Activated CD4-positive, alpha-beta memory T cell treated with anti-CD3 and anti-CD28 coated beads, Interleukin-2, amount 10 ng/mL, durations not matched to agents 7 days and 5 days (primary cell): ENCODE measurements at regions of chr17 and their contacts with region 1.

Region 1: GRCh38 chr17:75855310-75856081 is at the start of gene WBP2:
- DNase-seq: peak; percentile 98
- H3K4me3 Mint-ChIP-seq: no peak within 1 kb of the TSS
- H3K27ac Mint-ChIP-seq: peak within 1 kb of the TSS; percentile 85
- H3K4me1 Mint-ChIP-seq: peaks cover 43% of the 10 kb centered on the region
- H3K27me3 Mint-ChIP-seq: no peaks in the 10 kb centered on the region
- total RNA-seq, gene WBP2: 107 to 114 TPM

Region 2: DNA sequence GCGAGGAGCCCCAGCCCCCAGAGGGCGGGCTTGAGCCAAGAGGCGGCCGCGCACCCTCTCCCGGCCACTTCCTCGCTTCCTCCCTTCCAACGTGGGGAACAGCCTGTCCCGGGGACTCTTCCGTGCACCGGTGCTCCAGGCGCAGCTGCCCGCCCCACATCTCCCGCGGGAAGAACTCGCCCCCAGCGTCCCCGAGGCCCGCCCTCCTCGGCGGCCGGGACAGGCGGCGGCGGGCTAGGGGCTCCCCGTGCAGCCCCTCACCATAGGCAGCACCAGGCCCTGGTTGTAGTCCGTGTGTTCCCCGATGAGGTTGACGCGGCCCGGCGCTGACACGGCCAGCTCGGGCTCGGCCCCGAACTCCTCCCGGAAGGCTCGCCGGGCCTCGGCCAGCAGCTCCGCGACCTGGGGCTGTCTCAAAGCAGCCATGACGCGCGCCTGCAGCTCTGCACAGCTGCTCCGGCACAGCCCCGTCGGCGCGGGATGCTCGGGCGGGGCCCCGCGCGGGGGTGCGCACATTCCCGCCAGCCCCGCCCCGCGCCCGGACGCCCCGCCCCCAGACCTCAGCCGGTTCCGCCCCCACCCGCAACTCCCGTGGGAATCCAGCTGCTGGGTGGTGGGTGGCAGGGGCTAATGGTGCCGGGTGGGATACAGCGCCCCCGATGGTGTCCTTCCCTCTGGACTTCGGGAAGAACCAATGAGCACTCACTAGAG is 90.6 kb before region 1 on chr17 and contains the start of gene GALK1:
- CTCF ChIA-PET with region 1: interaction called, 5 read pairs
- POLR2A ChIA-PET with region 1: interaction called, 10 read pairs
- DNase-seq: peak; percentile 82
- H3K4me3 Mint-ChIP-seq: peak within 1 kb of the TSS; percentile 77
- H3K27ac Mint-ChIP-seq: peak within 1 kb of the TSS; percentile 49
- H3K4me1 Mint-ChIP-seq: peaks cover 19% of the 10 kb centered on the region
- H3K27me3 Mint-ChIP-seq: peaks cover 4% of the 10 kb centered on the region
- total RNA-seq, gene GALK1: 40.0 to 40.6 TPM

Region 3: GRCh38 chr17:75784473-75785015 is 71.0 kb before region 1 on chr17 and contains the start of gene UNK:
- CTCF ChIA-PET with region 1: interaction called, 17 read pairs
- POLR2A ChIA-PET with region 1: interaction called, 87 read pairs
- DNase-seq: peak; percentile 96
- H3K4me3 Mint-ChIP-seq: peak within 1 kb of the TSS; percentile 90
- H3K27ac Mint-ChIP-seq: peak within 1 kb of the TSS; percentile 100
- H3K4me1 Mint-ChIP-seq: peaks cover 52% of the 10 kb centered on the region
- H3K27me3 Mint-ChIP-seq: no peaks in the 10 kb centered on the region
- total RNA-seq, gene UNK: 26.1 TPM

Region 4: GRCh38 chr17:75872434-75873351 is 17.2 kb after region 1 on chr17:
- CTCF ChIA-PET with region 1: interaction called, 91 read pairs
- POLR2A ChIA-PET with region 1: interaction called, 221 read pairs
- DNase-seq: peak; percentile 86
- H3K4me3 Mint-ChIP-seq: peak overlapping the region; percentile 24
- H3K27ac Mint-ChIP-seq: peak overlapping the region; percentile 96
- H3K4me1 Mint-ChIP-seq: peaks cover 50% of the 10 kb centered on the region
- H3K27me3 Mint-ChIP-seq: no peaks in the 10 kb centered on the region

Region 5: DNA sequence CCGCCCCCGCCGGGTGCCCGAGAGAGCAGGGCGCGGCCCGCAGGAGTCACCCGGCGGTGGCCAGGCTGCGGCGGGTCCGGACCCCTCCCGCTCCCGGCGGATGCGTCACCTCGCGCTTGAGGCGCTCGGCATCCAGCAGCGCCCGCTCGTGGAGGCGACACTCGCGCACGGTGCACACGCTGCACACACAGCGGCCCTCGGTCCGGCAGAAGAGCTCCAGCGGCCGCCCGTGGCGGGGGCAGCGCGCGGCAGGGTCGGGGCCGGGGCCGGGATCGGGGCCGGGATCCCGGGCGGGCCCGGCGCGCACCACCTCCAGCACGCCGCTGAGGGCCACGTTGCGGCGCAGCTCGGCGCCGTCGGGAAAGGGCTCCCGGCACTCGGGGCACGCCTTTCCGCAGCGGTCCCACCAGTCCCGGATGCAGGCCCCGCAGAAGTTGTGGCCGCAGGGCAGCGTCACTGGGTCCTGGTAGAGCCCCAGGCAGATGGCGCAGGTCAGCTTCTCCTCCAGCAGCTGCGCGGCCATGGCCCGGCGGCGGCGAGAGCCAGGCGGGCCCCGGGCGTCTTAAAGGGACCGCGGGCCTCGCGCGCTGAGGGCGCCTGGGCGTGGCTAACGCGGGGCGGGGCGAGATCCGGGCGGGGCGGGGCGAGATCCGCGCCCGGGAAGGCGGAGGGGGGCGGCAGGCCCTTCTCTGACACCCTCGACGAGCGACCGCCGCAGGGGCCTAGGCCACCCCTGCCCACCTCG is 41.1 kb after region 1 on chr17 and contains the start of gene TRIM65:
- CTCF ChIA-PET with region 1: interaction called, 20 read pairs
- POLR2A ChIA-PET with region 1: interaction called, 50 read pairs
- DNase-seq: peak; percentile 83
- H3K4me3 Mint-ChIP-seq: peak within 1 kb of the TSS; percentile 81
- H3K27ac Mint-ChIP-seq: peak within 1 kb of the TSS; percentile 74
- H3K4me1 Mint-ChIP-seq: peaks cover 24% of the 10 kb centered on the region
- H3K27me3 Mint-ChIP-seq: no peaks in the 10 kb centered on the region
- total RNA-seq, gene TRIM65: 24.9 to 26.1 TPM